ENCODE measurements at regions of chr12 and their contacts with region 1.

Region 1: DNA sequence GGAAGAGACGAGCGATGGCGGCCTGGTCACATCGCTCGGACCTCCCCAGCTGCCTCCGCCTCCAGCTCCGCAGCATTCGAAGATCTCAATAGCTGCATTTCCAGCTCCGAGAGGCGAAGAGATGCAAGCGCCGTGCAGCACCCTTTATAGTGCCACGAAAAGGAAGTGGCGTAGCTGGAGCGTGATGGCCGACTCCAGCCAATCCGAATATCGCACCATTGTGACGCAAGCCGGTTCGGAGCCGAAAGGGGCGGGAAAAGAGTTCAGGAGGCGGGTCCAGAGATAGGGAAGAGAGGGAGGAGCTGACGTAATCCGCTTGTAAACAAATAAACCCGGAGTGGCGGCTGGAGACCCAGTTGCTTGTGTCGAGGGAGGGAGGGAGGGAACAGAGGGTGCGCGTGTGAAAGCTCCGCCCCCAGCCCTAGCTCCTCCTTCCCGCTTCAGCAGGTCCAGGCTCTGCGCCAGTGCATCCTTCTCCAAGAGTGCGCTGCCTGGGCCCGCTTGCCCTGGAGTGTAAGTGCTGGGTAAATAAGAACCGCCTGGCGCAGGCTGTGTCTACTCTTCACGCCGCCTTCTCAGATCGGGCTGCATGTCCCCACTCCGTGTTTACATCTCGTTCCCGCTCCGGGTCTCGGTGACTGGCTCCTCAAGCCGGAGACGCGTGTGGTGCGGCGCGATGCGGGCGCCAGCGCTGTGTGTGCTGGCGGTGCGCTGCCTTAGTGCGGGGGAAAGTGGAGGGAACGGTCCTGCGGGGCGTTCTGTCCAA is at the start of gene BTG1:
- DNase-seq: peak; percentile 89

Region 2: GRCh38 chr12:91382081-91382543 is 763.8 kb before region 1 on chr12:
- CTCF ChIA-PET with region 1: interaction called, 6 read pairs
- POLR2A ChIA-PET with region 1: interaction called, 28 read pairs
- DNase-seq: peak; percentile 52

Region 3: DNA sequence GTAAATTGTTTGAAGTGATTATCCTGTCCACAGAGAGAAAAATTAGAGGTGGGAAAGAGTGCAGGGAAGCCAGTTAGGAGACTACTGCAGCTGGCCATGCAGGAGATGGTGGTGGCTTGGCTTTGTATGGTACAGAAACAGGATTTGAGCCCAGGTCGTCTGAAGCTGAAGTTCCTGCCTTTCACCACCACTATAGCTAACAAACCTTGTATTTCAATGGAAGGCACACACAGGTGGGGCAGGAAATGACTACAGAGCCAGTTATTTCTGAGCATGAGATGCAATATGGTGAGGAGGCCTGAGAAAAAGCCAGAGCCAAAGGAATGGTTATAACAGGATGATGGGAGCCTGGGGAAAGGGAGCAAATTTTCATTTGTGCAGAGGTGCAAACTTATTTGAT is 104.2 kb before region 1 on chr12:
- CTCF ChIA-PET with region 1: no interaction called
- POLR2A ChIA-PET with region 1: interaction called, 10 read pairs
- DNase-seq: no peak

Region 4: DNA sequence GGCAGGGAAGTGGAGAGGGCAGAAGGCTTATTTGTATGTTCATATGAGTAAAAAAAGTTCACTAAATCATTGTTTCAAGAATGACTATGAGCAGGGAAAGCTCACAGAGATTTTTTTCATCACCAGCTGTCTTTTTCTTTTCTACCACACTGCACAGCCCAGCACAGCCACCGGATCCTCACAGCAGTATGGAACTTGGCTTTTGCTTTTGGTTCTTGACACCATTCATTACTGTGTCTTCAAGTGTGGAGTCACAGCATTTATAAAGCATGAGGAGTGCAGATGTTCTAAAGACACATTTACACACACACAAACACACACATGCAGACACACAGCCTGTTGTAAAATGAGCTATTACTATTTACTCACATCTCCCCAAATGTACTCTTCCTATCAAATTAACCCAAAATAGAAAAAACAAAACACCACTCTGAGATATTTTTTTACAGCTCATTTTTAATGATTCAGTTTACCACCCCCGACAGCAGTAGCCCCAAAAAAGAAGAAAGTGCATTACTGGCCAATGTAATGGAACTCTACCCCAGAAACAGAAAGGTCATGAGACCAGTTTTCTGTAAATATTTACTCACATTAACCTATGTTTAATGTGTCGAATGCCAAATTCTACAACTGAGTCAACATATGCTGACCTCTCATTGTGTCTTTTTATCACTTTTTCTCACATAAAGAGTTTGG is 60.7 kb before region 1 on chr12:
- CTCF ChIA-PET with region 1: no interaction called
- POLR2A ChIA-PET with region 1: interaction called, 16 read pairs
- DNase-seq: no peak

Region 5: GRCh38 chr12:92170050-92170449 is 24.1 kb after region 1 on chr12:
- CTCF ChIA-PET with region 1: no interaction called
- POLR2A ChIA-PET with region 1: interaction called, 10 read pairs
- DNase-seq: no peak

Region 6: GRCh38 chr12:92244036-92244435 is 98.1 kb after region 1 on chr12:
- CTCF ChIA-PET with region 1: no interaction called
- POLR2A ChIA-PET with region 1: interaction called, 23 read pairs
- DNase-seq: no peak

Region 7: DNA sequence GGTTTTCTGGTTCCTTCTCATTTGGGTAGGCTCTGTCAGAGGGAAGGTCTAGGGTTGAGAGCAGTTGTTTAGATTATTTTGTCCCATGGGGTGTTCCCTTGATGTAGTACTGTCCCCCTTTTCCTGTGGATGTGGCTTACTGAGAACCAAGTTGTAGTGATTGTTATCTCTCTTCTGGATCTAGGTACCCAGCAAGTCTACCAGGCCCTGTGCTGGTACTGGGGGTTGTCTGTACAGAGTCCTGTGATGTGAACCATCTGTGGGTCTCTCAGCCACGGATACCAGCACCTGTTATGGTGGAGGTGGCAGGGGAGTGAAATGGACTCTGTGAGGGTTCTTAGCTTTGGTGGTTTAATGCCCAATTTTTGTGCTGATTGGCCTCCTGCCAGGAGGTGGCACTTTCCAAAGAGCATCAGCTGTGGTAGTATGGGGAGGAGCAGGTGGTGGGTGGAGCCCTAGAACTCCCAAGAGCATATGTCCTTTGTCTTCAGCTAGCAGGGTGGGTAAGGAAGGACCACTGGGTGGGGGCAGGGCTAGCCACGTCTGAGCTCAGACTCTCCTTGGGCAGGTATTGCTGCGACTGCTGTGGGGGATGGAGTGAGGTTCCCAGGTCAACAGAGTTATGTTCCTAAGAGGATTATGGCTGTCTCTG is 179.1 kb after region 1 on chr12:
- CTCF ChIA-PET with region 1: no interaction called
- POLR2A ChIA-PET with region 1: no interaction called
- DNase-seq: no peak